ENCODE measurements at regions of chr12 and their contacts with region 1.

Region 1: DNA sequence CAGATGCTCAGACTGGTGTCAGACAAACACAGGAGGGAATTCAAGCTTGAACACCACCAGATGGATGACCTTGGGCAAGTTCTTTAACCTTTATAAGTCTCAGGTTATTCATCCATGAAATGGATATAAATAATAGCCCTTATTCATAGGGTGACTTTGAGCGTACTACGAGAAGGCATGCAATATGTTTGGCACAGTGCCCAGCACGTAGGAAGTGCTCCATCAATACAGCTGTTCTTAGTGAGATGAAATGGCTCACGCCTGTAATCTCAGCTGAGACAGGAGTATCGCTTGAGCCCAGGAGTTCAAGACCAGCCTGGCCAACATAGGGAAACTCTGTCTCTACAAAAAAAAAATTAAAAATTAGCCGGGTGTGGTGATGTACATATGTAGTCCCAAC is 84.8 kb upstream of the FICD start:
- DNase-seq: no peak
- H3K4me3 ChIP-seq: no peak overlapping the region
- H3K27ac ChIP-seq: no peak overlapping the region
- H3K4me1 ChIP-seq: no peaks in the 10 kb centered on the region
- H3K27me3 ChIP-seq: no peaks in the 10 kb centered on the region
- CTCF ChIP-seq: no peak
- POLR2A ChIP-seq: no peak

Region 2: GRCh38 chr12:108457734-108458361 is 27.6 kb after region 1 on chr12:
- intact Hi-C with region 1: loop called (anchors 2 kb)
- DNase-seq: peak in 1 of 2 donors; percentile 79
- H3K4me3 ChIP-seq: no peak overlapping the region
- H3K27ac ChIP-seq: peak overlapping the region in 1 of 2 donors; percentile 38
- H3K4me1 ChIP-seq: no peaks in the 10 kb centered on the region
- H3K27me3 ChIP-seq: peaks cover 0 to 3% of the 10 kb centered on the region in 2 donors
- CTCF ChIP-seq: no peak
- POLR2A ChIP-seq: no peak

Measured in breast epithelium (tissue), 4 donors.